ENCODE measurements at regions of chr1 and their contacts with region 1.

Region 1: DNA sequence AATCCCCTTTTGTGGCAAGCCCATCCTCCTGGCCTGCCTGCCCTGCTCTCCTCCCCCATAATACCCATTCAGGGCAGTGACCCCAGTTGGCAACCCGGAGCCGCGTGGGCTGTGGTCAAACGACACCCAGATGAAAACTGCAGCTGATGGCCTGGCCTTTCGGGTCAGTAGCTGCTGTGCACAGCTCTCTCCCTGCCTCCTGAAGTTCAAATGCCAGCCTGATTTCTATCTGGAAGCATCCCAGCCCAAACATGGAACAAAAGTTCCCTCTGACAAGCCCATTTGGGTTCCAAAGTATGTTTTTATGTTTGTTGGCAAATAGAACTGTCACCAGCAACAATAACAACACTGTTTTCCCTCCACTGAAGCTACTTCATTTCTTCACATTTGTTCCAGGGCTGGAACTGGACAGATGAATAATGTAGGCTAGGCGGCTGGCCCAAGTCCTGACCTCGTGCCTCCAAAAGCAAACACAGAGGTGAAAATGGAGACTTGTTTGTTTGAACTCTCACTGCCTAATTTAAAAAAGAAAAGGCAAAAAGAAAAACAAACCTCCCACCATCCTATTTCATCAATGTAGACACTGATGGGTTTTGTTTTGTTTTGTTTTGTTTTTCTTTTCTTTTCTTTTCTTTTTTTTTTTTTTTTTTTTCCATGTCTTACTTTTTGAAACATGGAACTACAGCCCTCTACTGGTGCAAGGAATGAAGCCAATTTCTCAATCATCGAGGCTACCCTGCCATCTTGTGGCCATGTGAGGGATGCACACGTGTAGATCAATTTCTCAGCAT is 179.0 kb downstream of the ADSS2 start:
- DNase-seq: peak; percentile 87
- ATAC-seq: peak; percentile 98
- H3K4me3 ChIP-seq: no peak overlapping the region
- H3K4me3 Mint-ChIP-seq: no peak overlapping the region
- H3K27ac ChIP-seq: no peak overlapping the region
- H3K27ac Mint-ChIP-seq: no peak overlapping the region
- H3K4me1 ChIP-seq: peaks cover 7 to 10% of the 10 kb centered on the region in 2 donors
- H3K4me1 Mint-ChIP-seq: peaks cover 15% of the 10 kb centered on the region
- H3K27me3 ChIP-seq: no peaks in the 10 kb centered on the region
- H3K27me3 Mint-ChIP-seq: no peaks in the 10 kb centered on the region
- CTCF ChIP-seq: peak; percentile 99

Region 2: DNA sequence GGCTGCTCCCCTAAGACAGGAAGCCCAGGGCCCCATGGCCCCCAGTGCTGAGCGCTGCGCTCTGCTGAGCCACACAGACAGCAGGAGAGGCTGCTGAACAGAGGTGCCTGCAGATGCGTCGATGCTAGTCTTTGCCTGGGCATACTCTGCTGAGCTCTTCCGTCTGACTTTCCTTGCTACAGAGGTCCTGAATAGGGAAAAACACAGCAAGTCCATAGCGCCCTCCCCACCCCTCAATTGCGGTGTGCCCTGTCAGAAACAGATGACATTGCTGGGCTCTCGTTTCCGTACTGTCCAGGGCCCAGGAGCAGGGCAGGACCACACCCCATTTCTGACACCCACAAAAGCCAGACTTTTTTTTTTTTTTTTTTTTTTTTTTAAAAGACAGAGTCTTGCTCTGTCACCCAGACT is 764.4 kb before region 1 on chr1:
- CTCF ChIA-PET with region 1: no interaction called
- POLR2A ChIA-PET with region 1: no interaction called
- intact Hi-C with region 1: loop called (anchors 10 kb)
- DNase-seq: peak; percentile 71
- ATAC-seq: peak; percentile 89
- H3K4me3 ChIP-seq: peak overlapping the region in 3 of 5 experiments; percentile 11 to 34 (median 26)
- H3K4me3 Mint-ChIP-seq: peak overlapping the region; percentile 78
- H3K27ac ChIP-seq: peak overlapping the region; percentile 3 to 31
- H3K27ac Mint-ChIP-seq: peak overlapping the region; percentile 88
- H3K4me1 ChIP-seq: peaks cover 32 to 34% of the 10 kb centered on the region in 2 donors
- H3K4me1 Mint-ChIP-seq: peaks cover 46% of the 10 kb centered on the region
- H3K27me3 ChIP-seq: no peaks in the 10 kb centered on the region
- H3K27me3 Mint-ChIP-seq: no peaks in the 10 kb centered on the region
- CTCF ChIP-seq: no peak

Region 3: GRCh38 chr1:243748706-243749283 is 523.9 kb before region 1 on chr1:
- CTCF ChIA-PET with region 1: interaction called, 21 read pairs
- POLR2A ChIA-PET with region 1: no interaction called
- intact Hi-C with region 1: loop called (anchors 1 kb)
- DNase-seq: peak; percentile 73
- ATAC-seq: peak; percentile 93
- H3K4me3 ChIP-seq: no peak overlapping the region
- H3K4me3 Mint-ChIP-seq: no peak overlapping the region
- H3K27ac ChIP-seq: no peak overlapping the region
- H3K27ac Mint-ChIP-seq: no peak overlapping the region
- H3K4me1 ChIP-seq: no peaks in the 10 kb centered on the region
- H3K4me1 Mint-ChIP-seq: peaks cover 1% of the 10 kb centered on the region
- H3K27me3 ChIP-seq: no peaks in the 10 kb centered on the region
- H3K27me3 Mint-ChIP-seq: no peaks in the 10 kb centered on the region
- CTCF ChIP-seq: peak; percentile 94

Region 4: DNA sequence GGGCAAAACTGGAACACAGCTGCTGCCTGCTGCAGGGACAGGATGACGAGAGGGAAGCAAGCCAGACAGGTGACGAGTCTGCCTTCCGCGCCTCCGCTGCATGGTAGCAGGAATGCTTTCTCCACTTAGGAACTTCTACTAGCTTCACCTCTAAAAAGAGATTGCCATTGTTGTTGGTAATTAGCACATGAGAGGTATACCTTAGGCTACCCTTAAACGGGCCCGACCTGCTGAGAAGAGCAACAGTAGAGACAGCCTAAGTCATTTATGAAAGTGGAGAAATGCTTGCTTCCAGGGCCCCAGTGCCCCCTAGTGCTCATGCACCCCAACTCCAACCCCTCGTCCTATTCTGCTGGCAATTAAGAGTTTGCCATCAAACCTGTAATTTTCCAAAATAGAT is 325.7 kb before region 1 on chr1:
- CTCF ChIA-PET with region 1: no interaction called
- POLR2A ChIA-PET with region 1: no interaction called
- intact Hi-C with region 1: loop called (anchors 1 kb)
- DNase-seq: peak; percentile 37
- ATAC-seq: no peak
- H3K4me3 ChIP-seq: no peak overlapping the region
- H3K4me3 Mint-ChIP-seq: no peak overlapping the region
- H3K27ac ChIP-seq: no peak overlapping the region
- H3K27ac Mint-ChIP-seq: no peak overlapping the region
- H3K4me1 ChIP-seq: no peaks in the 10 kb centered on the region
- H3K4me1 Mint-ChIP-seq: no peaks in the 10 kb centered on the region
- H3K27me3 ChIP-seq: peaks cover 0 to 9% (median 2%) of the 10 kb centered on the region in 4 experiments
- H3K27me3 Mint-ChIP-seq: peaks cover 8% of the 10 kb centered on the region
- CTCF ChIP-seq: peak; percentile 51

Region 5: GRCh38 chr1:244002721-244003120 is 269.9 kb before region 1 on chr1:
- CTCF ChIA-PET with region 1: no interaction called
- POLR2A ChIA-PET with region 1: no interaction called
- intact Hi-C with region 1: no loop called
- DNase-seq: no peak
- ATAC-seq: no peak
- H3K4me3 ChIP-seq: no peak overlapping the region
- H3K4me3 Mint-ChIP-seq: no peak overlapping the region
- H3K27ac ChIP-seq: no peak overlapping the region
- H3K27ac Mint-ChIP-seq: no peak overlapping the region
- H3K4me1 ChIP-seq: peaks cover 8 to 9% of the 10 kb centered on the region in 2 donors
- H3K4me1 Mint-ChIP-seq: peaks cover 12% of the 10 kb centered on the region
- H3K27me3 ChIP-seq: no peaks in the 10 kb centered on the region
- H3K27me3 Mint-ChIP-seq: peaks cover 11% of the 10 kb centered on the region
- CTCF ChIP-seq: no peak

Region 6: DNA sequence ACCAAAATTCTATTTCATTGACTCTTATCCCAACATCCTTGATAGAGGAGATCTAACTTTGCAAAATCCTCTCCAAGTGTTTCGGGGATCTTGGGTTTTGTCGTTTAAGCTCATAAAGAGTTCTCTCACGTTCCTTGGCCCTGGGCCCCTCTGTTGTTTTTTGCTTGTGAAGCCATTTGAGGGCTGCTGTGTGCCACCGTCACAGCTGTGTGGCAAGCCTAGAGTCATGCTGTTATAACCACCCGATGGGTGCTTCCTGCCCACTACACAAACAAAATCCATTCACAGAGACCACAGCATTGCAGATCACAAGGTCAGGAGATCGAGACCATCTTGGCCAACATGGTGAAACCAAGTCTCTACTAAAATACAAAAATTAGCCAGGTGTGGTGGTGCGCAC is 24.9 kb after region 1 on chr1:
- CTCF ChIA-PET with region 1: interaction called, 32 read pairs
- POLR2A ChIA-PET with region 1: no interaction called
- intact Hi-C with region 1: loop called (anchors 1 kb)
- DNase-seq: no peak
- ATAC-seq: no peak
- H3K4me3 ChIP-seq: no peak overlapping the region
- H3K4me3 Mint-ChIP-seq: no peak overlapping the region
- H3K27ac ChIP-seq: no peak overlapping the region
- H3K27ac Mint-ChIP-seq: peak overlapping the region; percentile 99
- H3K4me1 ChIP-seq: peaks cover 4 to 17% of the 10 kb centered on the region in 2 donors
- H3K4me1 Mint-ChIP-seq: peaks cover 12% of the 10 kb centered on the region
- H3K27me3 ChIP-seq: no peaks in the 10 kb centered on the region
- H3K27me3 Mint-ChIP-seq: no peaks in the 10 kb centered on the region
- CTCF ChIP-seq: no peak

Region 7: GRCh38 chr1:244548557-244549115 is 276.0 kb after region 1 on chr1:
- CTCF ChIA-PET with region 1: no interaction called
- POLR2A ChIA-PET with region 1: no interaction called
- intact Hi-C with region 1: no loop called
- DNase-seq: no peak
- ATAC-seq: no peak
- H3K4me3 ChIP-seq: no peak overlapping the region
- H3K4me3 Mint-ChIP-seq: no peak overlapping the region
- H3K27ac ChIP-seq: no peak overlapping the region
- H3K27ac Mint-ChIP-seq: no peak overlapping the region
- H3K4me1 ChIP-seq: no peaks in the 10 kb centered on the region
- H3K4me1 Mint-ChIP-seq: no peaks in the 10 kb centered on the region
- H3K27me3 ChIP-seq: no peaks in the 10 kb centered on the region
- H3K27me3 Mint-ChIP-seq: no peaks in the 10 kb centered on the region
- CTCF ChIP-seq: no peak

Measured in B cell (primary cell).